ENCODE measurements at regions of chr4 and their contacts with region 1.

Region 1: GRCh38 chr4:2763511-2763967 is 7.4 kb upstream of the TNIP2 start:
- DNase-seq: no peak
- H3K4me3 ChIP-seq: peak overlapping the region; percentile 59; the same call in 1 of the 2 replicates
- H3K27ac ChIP-seq: no peak overlapping the region
- H3K27me3 ChIP-seq: no peaks in the 10 kb centered on the region
- CTCF ChIP-seq: no peak

Region 2: DNA sequence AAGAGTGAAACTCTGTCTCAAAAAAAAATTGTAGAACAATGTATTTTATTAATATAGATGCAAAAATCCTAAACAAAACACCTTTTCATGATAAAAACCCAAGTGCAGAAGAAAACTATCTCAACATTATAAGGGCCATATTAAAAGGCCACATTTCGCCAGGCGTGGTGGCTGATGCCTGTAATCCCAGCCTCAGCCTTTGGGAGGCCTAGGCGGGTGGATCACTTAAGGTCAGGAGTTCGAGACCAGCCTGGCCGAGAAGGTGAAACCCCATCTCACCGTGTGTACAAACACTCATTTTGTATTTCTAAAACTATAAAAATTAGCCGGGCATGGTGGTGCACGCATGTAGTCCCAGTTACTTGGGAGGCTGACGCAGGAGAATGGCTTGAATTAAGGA is 237.0 kb before region 1 on chr4:
- CTCF ChIA-PET with region 1: no interaction called
- POLR2A ChIA-PET with region 1: no interaction called
- DNase-seq: no peak
- H3K4me3 ChIP-seq: no peak overlapping the region
- H3K27ac ChIP-seq: no peak overlapping the region
- H3K27me3 ChIP-seq: no peaks in the 10 kb centered on the region
- CTCF ChIP-seq: no peak

Region 3: DNA sequence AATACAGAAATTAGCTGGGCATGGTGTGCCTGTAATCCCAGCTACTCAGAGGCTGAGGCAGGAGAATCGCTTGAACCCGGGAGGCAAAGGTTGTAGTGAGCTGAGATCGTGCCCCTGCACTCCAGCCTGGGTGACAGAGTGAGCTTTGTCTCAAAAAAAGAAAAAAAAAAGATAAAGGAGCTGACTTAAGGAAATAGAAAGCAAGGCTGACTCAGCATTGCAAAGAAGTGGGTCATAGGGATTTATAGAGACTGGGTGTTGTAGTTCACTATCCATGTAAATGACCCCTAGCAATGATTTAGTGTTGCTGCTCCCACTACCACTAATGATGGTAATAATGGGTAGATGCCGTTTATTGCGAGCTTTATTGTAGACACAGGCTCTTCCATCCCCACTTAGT is 127.8 kb after region 1 on chr4:
- CTCF ChIA-PET with region 1: interaction called, 10 read pairs
- POLR2A ChIA-PET with region 1: no interaction called
- DNase-seq: no peak
- H3K4me3 ChIP-seq: no peak overlapping the region
- H3K27ac ChIP-seq: peak overlapping the region; percentile 31
- H3K27me3 ChIP-seq: no peaks in the 10 kb centered on the region
- CTCF ChIP-seq: no peak

Region 4: GRCh38 chr4:2934813-2935761 is 171.5 kb after region 1 on chr4:
- CTCF ChIA-PET with region 1: interaction called, 11 read pairs
- POLR2A ChIA-PET with region 1: no interaction called
- DNase-seq: peak; percentile 47
- H3K4me3 ChIP-seq: peak overlapping the region; percentile 86
- H3K27ac ChIP-seq: peak overlapping the region; percentile 39
- H3K27me3 ChIP-seq: no peaks in the 10 kb centered on the region
- CTCF ChIP-seq: no peak

Region 5: GRCh38 chr4:3128976-3129375 is 365.4 kb after region 1 on chr4:
- CTCF ChIA-PET with region 1: no interaction called
- POLR2A ChIA-PET with region 1: no interaction called
- DNase-seq: no peak
- H3K4me3 ChIP-seq: no peak overlapping the region
- H3K27ac ChIP-seq: no peak overlapping the region
- H3K27me3 ChIP-seq: no peaks in the 10 kb centered on the region
- CTCF ChIP-seq: no peak